ENCODE measurements at regions of chr5 and their contacts with region 1.

Region 1: DNA sequence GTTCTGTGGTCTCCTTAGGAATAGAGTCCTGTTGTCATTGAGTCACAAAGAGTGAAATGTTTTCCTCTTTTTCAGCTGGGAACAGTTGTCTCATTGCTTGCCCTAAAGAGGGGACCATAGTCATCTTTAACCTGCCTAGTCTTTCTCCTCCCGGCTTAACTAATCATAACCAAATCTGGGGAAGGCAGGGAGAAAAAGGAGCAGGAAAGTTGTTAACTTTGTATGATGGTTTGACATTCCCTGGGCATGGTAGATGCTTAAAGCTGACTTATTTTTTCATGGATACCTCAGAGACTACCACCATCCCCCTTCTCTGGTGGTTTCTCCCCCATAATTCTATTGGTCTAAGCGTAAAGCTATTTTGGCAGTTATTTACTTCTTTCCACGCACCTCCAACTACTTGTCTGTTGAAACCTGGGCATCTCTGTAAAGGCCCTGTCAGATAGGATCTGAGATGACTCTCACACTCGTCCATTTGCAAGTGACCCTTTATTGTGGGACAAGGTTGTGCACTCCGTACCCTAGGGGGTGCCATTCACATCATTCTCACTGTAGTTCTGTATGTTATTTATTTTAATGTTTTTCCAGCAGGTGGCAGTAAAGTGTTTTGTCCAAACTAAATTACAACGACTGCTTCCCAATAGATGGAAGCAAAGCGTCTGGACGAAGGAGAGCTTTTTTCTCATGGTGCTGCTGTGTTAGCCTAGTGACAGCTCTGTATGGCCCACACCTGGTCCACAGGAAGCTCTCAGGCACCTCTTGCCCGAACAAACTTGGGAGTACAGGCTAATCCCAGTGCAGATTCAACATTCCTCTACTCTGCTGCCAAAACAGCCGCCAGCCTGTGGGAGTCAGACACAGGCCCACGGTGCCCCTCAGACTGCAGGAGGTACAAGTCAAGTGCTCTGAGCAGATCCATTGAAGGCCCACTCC is 3.0 kb upstream of the FAM13B start:
- DNase-seq: peak; percentile 11 to 80 (median 72)
- ATAC-seq: peak; percentile 76
- H3K4me3 ChIP-seq: no peak overlapping the region
- H3K4me3 Mint-ChIP-seq: peak overlapping the region in 9 of 10 donors; percentile 0 to 78 (median 25)
- H3K27ac ChIP-seq: no peak overlapping the region
- H3K27ac Mint-ChIP-seq: peak overlapping the region in 8 of 9 donors; percentile 4 to 89 (median 37)
- H3K4me1 ChIP-seq: peaks cover 4 to 24% of the 10 kb centered on the region in 2 donors
- H3K4me1 Mint-ChIP-seq: peaks cover 15 to 30% (median 24%) of the 10 kb centered on the region in 7 donors
- H3K27me3 ChIP-seq: no peaks in the 10 kb centered on the region
- H3K27me3 Mint-ChIP-seq: no peaks in the 10 kb centered on the region

Region 2: DNA sequence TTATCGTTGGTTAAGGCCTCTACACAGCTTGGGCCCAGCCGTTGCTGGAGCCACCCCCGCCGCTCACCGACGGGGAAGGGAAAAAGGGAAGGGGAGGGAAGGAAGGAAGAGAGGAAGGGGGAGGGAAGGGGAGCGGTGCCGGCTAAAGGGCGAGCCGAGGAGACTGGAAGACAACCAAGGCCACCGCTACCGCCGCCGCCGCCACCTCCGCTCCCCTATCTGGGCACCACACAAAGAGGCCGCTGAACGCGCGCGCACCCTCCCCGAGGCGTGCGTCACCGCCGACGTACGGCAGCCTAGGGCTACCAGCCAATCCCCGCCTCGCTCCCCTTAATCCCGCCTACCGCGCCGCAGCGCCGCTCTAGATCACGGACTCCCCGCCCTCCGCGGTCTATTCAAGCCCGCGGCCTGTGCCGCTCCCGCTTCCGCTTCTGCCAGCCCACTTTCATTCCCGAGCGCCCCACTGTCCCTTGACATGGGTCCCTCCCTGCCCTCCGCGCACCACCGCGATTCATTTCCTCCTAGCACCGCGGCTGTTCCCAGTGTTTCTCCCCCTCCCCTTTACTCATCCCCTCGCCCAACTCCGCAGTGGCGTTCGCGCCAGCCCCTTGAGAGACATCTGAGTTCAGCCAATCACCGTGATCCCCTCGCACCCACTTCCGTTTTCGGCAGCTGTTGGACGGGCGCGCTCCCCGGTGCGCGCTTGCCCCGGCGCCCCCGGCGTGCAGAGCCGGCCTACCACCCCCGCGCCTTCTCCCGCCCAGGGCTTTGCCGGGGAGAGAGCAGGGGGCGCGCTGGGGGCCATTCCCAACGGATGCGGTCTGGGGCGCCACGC is 281.5 kb before region 1 on chr5 and contains the start of gene HNRNPA0:
- CTCF ChIA-PET with region 1: no interaction called
- POLR2A ChIA-PET with region 1: interaction called, 4 read pairs
- intact Hi-C with region 1: loop called (anchors 1 kb)
- DNase-seq: peak; percentile 94 to 99 (median 98)
- ATAC-seq: peak; percentile 90
- H3K4me3 ChIP-seq: peak within 1 kb of the TSS; percentile 98
- H3K4me3 Mint-ChIP-seq: peak within 1 kb of the TSS; percentile 85 to 100 (median 98)
- H3K27ac ChIP-seq: peak within 1 kb of the TSS; percentile 98
- H3K27ac Mint-ChIP-seq: peak within 1 kb of the TSS; percentile 99 to 100 (median 100)
- H3K4me1 ChIP-seq: peaks cover 17 to 20% of the 10 kb centered on the region in 2 donors
- H3K4me1 Mint-ChIP-seq: peaks cover 21 to 43% (median 31%) of the 10 kb centered on the region in 7 donors
- H3K27me3 ChIP-seq: no peaks in the 10 kb centered on the region
- H3K27me3 Mint-ChIP-seq: peaks cover 0 to 2% (median 0%) of the 10 kb centered on the region in 5 donors
- total RNA-seq, gene HNRNPA0: 30.0 to 40.2 (median 30.7) TPM

Region 3: DNA sequence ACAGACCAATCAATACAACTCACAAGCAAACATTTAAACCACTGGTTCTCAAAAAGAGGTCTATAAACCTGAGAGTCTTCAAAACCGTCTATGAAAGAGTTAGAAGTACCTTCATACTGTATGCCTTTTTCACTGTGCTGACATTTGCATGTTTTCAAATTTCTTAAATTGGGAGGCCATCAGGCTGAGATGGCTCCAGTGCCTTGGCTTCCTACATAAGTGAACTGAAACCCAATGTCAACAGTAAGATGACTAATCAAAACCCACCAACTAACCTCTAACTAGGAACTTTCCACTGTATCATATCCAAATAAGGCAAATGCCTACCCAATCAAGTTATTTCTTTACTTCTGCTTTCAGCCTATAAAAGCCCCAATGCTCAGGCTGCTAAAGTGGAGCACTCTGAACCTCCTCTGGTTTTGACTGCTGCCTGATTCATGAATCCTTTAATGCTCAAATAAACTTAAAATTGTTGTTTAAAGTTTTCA is 38.1 kb before region 1 on chr5:
- CTCF ChIA-PET with region 1: no interaction called
- POLR2A ChIA-PET with region 1: no interaction called
- intact Hi-C with region 1: no loop called
- DNase-seq: no peak
- ATAC-seq: peak; percentile 45
- H3K4me3 ChIP-seq: no peak overlapping the region
- H3K4me3 Mint-ChIP-seq: peak overlapping the region in 1 of 10 donors; percentile 9
- H3K27ac ChIP-seq: no peak overlapping the region
- H3K27ac Mint-ChIP-seq: peak overlapping the region in 5 of 9 donors; percentile 5 to 81 (median 6)
- H3K4me1 ChIP-seq: peaks cover 0 to 4% of the 10 kb centered on the region in 2 donors
- H3K4me1 Mint-ChIP-seq: peaks cover 12 to 53% (median 46%) of the 10 kb centered on the region in 7 donors
- H3K27me3 ChIP-seq: no peaks in the 10 kb centered on the region
- H3K27me3 Mint-ChIP-seq: no peaks in the 10 kb centered on the region

Region 4: DNA sequence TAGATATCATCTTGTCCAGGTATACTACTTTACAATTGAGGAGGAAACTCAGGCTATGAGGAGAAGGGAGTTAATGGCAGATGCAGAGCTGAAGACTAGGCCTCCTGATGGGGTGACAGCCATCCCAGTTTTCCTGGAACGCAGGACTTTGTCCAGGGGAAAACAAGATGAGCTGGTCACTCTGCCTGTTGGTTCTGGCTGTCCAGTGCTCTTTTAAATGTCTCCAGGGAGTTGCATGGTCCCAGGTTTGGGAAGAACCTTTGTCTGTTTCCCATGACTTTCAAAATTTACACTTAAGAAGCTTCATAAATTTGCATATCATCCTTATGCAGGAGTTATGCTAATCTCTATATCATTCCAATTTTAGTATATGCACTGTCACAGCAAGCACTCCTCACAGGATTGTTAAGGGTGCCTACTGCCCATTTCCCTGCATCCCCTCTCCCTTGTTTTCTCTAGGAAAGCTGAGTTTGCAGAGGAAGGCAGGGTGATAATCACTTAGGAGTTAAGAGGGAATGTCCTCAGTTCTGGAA is 33.3 kb after region 1 on chr5:
- CTCF ChIA-PET with region 1: interaction called, 11 read pairs
- POLR2A ChIA-PET with region 1: no interaction called
- intact Hi-C with region 1: loop called (anchors 1 kb)
- DNase-seq: no peak
- ATAC-seq: no peak
- H3K4me3 ChIP-seq: no peak overlapping the region
- H3K4me3 Mint-ChIP-seq: no peak overlapping the region
- H3K27ac ChIP-seq: no peak overlapping the region
- H3K27ac Mint-ChIP-seq: no peak overlapping the region
- H3K4me1 ChIP-seq: no peaks in the 10 kb centered on the region
- H3K4me1 Mint-ChIP-seq: peaks cover 0 to 11% (median 4%) of the 10 kb centered on the region in 7 donors
- H3K27me3 ChIP-seq: no peaks in the 10 kb centered on the region
- H3K27me3 Mint-ChIP-seq: no peaks in the 10 kb centered on the region

Region 5: DNA sequence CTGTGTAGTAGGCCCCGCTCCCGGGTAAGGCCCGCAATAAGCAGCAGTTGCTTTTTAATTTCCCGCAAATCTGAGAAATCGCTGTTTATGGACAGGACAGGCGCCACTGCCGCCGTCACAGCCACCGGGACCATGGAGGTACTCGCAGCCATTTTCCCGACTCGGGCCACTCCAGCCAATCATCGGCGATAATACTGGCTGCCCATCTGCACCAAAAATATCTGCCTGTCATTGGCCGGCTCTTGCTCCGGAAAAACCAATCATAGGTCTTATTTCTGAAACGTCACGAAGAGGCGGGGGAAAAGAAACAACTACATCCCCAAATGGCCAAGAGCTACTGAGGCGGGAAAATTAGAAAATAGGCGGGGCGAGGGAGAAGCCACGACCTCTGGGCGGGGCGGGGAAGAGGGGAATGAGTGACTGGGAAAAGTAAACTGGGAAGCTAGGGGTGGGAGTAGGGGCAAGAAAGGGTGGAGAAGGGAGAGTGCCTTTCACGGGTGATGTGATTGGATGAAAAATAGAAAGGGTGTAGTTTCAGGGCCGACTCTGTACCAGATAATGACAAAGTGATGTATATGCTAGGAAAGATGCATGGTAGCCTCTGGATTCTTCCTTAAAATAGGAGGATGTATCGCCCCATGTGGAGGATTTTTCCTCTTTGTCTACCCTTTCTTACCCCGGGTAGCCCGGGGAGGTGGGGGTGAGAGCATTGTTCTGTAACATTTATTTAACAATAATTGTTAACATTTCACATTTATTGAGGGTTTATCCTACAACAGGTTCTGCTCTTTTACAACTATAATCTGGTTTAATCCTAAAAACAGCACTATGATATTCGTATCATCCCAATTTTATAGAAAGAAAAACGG is 177.5 kb after region 1 on chr5 and contains the start of gene CDC23:
- CTCF ChIA-PET with region 1: no interaction called
- POLR2A ChIA-PET with region 1: no interaction called
- intact Hi-C with region 1: loop called in 1 of 2 experiments (anchors 1 kb)
- DNase-seq: peak; percentile 65 to 95 (median 92)
- ATAC-seq: peak; percentile 98
- H3K4me3 ChIP-seq: peak within 1 kb of the TSS; percentile 97
- H3K4me3 Mint-ChIP-seq: peak within 1 kb of the TSS; percentile 92 to 99 (median 98)
- H3K27ac ChIP-seq: peak within 1 kb of the TSS; percentile 91
- H3K27ac Mint-ChIP-seq: peak within 1 kb of the TSS; percentile 95 to 98 (median 96)
- H3K4me1 ChIP-seq: peaks cover 0 to 8% of the 10 kb centered on the region in 2 donors
- H3K4me1 Mint-ChIP-seq: peaks cover 14 to 32% (median 27%) of the 10 kb centered on the region in 7 donors
- H3K27me3 ChIP-seq: no peaks in the 10 kb centered on the region
- H3K27me3 Mint-ChIP-seq: no peaks in the 10 kb centered on the region
- total RNA-seq, gene CDC23: 13.0 to 39.6 (median 25.5) TPM

Region 6: DNA sequence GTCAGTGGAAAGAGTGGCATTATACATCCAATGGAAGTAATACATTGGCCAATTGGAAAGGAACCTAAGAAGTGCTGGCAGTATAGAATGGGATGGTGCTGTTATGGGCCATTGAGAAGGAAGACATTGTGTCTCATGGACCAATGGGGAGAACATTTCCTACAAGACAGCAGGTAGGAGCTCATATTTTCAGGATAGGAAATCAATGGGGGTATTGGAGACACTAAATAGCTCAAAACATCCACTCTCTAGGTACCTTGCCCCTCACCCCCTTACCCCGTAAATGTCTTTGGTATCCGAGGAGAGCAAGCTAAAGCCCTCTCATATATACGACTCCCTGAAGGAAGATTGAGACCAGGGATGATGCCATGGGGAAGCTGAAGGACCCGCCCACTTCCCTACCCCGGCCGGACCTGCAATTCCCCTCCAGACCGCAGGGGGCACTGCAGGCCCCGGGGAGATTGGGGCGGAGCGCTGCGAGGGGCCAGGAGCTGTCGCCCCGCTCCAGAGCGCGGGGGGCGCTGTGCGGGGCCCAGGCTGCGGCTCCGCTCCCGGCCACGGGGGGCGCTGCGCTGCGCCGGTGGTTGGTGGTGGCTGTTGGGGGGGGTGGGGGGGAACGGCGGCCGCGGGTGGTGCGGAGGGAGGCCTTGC is 316.3 kb after region 1 on chr5 and contains the start of gene KDM3B:
- CTCF ChIA-PET with region 1: no interaction called
- POLR2A ChIA-PET with region 1: interaction called, 3 read pairs
- intact Hi-C with region 1: loop called in 1 of 2 experiments (anchors 5 kb)
- DNase-seq: peak; percentile 82 to 100 (median 96)
- ATAC-seq: peak; percentile 96
- H3K4me3 ChIP-seq: peak within 1 kb of the TSS; percentile 93
- H3K4me3 Mint-ChIP-seq: peak within 1 kb of the TSS; percentile 88 to 98 (median 96)
- H3K27ac ChIP-seq: peak within 1 kb of the TSS; percentile 91
- H3K27ac Mint-ChIP-seq: peak within 1 kb of the TSS; percentile 90 to 98 (median 96)
- H3K4me1 ChIP-seq: peaks cover 18 to 32% of the 10 kb centered on the region in 2 donors
- H3K4me1 Mint-ChIP-seq: peaks cover 30 to 54% (median 48%) of the 10 kb centered on the region in 7 donors
- H3K27me3 ChIP-seq: no peaks in the 10 kb centered on the region
- H3K27me3 Mint-ChIP-seq: no peaks in the 10 kb centered on the region
- total RNA-seq, gene KDM3B: 67.7 to 90.2 (median 82.8) TPM

Measured in naive thymus-derived CD4-positive, alpha-beta T cell (primary cell).